ENCODE measurements at regions of chr17 and their contacts with region 1.

Region 1: DNA sequence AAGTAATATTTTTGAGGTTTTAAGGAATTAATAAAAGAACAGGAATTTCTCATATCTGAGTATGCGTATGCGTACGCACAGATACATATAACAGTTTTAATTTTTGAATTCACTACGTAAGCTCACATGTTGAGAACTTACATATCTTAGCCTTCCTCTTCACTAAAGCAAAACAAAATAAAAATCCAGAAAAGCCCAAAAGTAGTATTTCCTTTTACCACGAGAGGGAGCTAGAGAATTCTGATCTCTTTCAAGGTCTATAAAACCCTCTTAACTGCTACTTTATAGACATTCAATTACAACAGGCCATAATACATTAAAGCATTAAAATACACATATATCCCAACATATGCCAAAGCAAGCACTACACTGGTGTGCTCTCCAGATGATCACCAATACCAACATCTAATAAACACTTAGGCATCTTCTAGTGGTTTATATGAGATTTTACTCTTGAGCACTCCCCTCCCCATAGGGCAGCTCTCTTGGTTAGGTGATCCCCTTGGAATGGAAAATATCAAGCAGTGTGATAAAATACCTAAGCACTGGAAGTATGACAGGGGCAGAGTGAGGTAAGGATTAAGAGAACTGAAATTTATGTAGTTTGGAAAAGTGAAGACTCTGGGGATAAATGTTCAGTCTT is 94.0 kb downstream of the SKAP1 start:
- DNase-seq: no peak
- ATAC-seq: no peak
- H3K4me3 ChIP-seq: no peak overlapping the region
- H3K27ac ChIP-seq: no peak overlapping the region
- H3K4me1 ChIP-seq: no peaks in the 10 kb centered on the region
- H3K27me3 ChIP-seq: no peaks in the 10 kb centered on the region

Region 2: GRCh38 chr17:48413613-48414405 is 77.8 kb after region 1 on chr17:
- intact Hi-C with region 1: no loop called
- DNase-seq: no peak
- ATAC-seq: no peak
- H3K4me3 ChIP-seq: no peak overlapping the region
- H3K27ac ChIP-seq: no peak overlapping the region
- H3K4me1 ChIP-seq: no peaks in the 10 kb centered on the region
- H3K27me3 ChIP-seq: no peaks in the 10 kb centered on the region

Region 3: GRCh38 chr17:48593840-48594537 is 258.0 kb after region 1 on chr17:
- intact Hi-C with region 1: loop called in 1 of 2 experiments (anchors 5 kb)
- DNase-seq: peak; percentile 88 to 95
- ATAC-seq: peak; percentile 88
- H3K4me3 ChIP-seq: no peak overlapping the region
- H3K27ac ChIP-seq: no peak overlapping the region
- H3K4me1 ChIP-seq: no peaks in the 10 kb centered on the region
- H3K27me3 ChIP-seq: no peaks in the 10 kb centered on the region

Region 4: GRCh38 chr17:48618256-48618897 is 282.4 kb after region 1 on chr17:
- intact Hi-C with region 1: loop called (anchors 5 kb)
- DNase-seq: peak; percentile 90 to 96
- ATAC-seq: peak; percentile 92
- H3K4me3 ChIP-seq: no peak overlapping the region
- H3K27ac ChIP-seq: no peak overlapping the region
- H3K4me1 ChIP-seq: no peaks in the 10 kb centered on the region
- H3K27me3 ChIP-seq: no peaks in the 10 kb centered on the region

Region 5: DNA sequence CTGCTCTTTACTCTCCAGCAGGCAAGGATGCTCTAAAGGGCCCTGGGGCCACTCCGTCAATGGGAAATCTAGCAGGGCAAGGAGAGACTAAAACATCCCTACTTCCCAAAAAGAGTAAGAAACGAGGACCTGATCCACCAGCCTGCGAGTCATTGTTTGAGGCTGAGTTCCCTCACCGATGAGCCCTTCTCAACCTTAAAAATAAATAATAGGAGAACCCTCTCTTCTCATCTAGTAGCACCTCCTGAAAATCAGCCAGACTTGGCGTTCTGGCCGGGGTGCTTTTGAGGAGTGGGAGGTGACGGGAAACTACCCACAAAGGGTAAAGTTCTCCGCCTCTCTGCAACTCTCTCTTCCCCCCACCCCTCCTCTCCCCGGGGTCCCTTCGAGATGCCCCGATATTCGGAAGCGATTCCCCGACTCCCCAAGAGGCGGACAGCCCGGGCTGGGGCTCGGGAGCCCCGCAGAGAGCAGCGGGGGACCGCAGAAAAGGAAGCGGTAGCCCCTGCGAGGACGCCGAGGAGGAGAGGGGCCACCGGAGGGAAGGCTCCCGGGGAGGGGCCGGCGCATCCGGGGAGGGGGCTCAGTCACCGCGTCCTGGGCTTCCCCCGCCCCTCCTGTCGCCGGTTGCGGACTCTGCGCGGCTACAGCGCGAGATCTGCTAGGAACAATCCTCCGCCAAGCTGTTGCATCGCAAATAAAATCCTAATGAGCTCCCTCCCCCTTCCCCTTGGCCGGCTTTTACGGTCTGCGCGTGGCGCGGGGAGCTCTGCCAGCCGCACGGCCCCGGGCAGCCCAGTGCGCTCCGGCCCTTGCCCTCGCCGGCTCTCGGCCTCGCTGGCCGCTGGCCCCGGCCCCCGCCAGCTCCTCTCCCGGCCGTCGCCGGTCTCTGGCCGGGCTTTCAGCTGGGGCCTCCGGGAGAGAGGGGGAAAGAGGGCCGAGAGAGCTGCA is 288.8 kb after region 1 on chr17:
- intact Hi-C with region 1: loop called in 1 of 2 experiments (anchors 5 kb)
- DNase-seq: no peak
- ATAC-seq: peak; percentile 61
- H3K4me3 ChIP-seq: no peak overlapping the region
- H3K27ac ChIP-seq: no peak overlapping the region
- H3K4me1 ChIP-seq: no peaks in the 10 kb centered on the region
- H3K27me3 ChIP-seq: no peaks in the 10 kb centered on the region

Measured in aorta (tissue), 5 donors.